Prostate gland (tissue), 2 donors: ENCODE measurements at regions of chr15 and their contacts with region 1.

Region 1: DNA sequence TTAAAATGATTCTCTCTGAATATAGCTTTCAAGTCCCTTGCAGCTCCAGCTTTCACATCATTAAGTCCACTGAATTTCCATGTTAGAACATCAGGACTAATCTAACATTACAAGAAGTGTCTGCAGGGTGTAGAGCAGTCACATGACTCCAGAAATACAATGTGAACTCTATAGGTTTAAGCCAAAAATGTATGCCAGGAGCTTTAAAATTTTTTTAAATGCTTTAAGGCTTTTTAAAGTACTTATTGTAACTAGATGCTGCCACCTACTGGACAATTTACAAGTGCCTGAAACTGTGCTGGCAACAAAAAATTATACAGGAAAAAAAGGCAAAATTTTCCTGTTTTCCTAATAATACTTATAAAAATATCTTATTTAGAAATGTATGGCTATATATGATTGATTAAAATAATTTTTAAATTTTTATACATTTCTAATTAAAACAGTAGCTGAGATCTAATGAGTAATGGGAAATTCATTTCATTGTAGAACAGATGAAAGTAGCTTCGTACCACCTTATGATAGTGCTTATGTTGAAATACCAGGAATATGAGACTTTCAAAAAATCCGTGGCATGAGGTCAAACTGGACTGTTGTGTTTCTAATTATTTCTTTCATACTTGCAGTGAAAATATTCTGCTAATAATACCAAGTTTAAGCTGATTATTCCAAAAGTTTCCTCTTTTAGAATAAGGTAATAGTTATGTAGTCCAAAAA is 25.7 kb downstream of the FSIP1 start:
- DNase-seq: peak; percentile 31
- H3K4me3 ChIP-seq: no peak overlapping the region
- H3K27ac ChIP-seq: no peak overlapping the region
- H3K4me1 ChIP-seq: no peaks in the 10 kb centered on the region
- H3K27me3 ChIP-seq: no peaks in the 10 kb centered on the region
- CTCF ChIP-seq: peak; percentile 68 to 84 (median 76)
- POLR2A ChIP-seq: no peak

Region 2: DNA sequence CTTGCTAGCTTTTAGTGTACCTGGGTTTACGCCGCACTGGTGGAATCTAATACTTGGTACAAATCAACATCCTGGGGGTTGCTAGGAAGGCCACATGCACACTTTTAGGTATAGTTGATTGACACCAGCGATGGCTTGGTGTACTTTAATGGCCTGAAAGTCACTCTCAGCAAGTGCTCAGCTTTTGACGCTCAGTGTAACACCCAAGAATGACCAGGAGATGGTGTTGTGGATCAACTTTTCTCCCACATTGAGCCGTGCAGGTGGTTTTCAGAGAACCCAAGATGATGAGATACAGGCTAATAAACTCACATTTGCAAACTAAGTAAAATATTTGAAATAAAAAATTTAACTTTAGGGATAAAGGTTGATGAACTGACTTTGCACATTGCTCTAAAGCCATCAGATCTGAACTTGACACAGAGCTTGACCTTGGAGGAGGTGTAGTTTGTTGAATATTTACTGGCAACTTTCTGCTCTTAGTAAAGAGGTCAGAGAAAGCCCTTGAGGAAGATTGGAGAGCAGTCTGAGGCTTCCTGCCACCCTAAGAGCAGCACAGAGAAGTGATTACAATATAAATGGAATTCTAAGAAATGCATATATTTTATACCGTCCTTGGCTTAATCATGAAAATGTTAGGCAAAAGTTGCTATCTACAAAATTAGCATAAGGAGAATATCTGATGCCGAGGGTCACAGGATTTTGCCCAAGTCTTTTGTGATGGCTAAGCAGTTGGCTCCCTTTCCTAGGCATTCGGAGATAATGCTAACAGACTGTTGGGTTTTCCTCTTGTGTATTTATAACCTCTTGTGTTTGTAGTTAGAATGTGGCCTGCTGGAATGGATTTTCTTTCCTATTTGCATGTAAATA is 1048.9 kb before region 1 on chr15:
- intact Hi-C with region 1: loop called (anchors 2 kb)
- DNase-seq: peak; percentile 36
- H3K4me3 ChIP-seq: no peak overlapping the region
- H3K27ac ChIP-seq: no peak overlapping the region
- H3K4me1 ChIP-seq: no peaks in the 10 kb centered on the region
- H3K27me3 ChIP-seq: no peaks in the 10 kb centered on the region
- CTCF ChIP-seq: peak in 3 of 4 experiments; percentile 54 to 82 (median 75)
- POLR2A ChIP-seq: no peak

Region 3: GRCh38 chr15:38817427-38818156 is 939.4 kb before region 1 on chr15:
- intact Hi-C with region 1: loop called (anchors 5 kb)
- DNase-seq: peak; percentile 88
- H3K4me3 ChIP-seq: no peak overlapping the region
- H3K27ac ChIP-seq: no peak overlapping the region
- H3K4me1 ChIP-seq: no peaks in the 10 kb centered on the region
- H3K27me3 ChIP-seq: no peaks in the 10 kb centered on the region
- CTCF ChIP-seq: peak; percentile 97 to 99 (median 98)
- POLR2A ChIP-seq: no peak

Region 4: DNA sequence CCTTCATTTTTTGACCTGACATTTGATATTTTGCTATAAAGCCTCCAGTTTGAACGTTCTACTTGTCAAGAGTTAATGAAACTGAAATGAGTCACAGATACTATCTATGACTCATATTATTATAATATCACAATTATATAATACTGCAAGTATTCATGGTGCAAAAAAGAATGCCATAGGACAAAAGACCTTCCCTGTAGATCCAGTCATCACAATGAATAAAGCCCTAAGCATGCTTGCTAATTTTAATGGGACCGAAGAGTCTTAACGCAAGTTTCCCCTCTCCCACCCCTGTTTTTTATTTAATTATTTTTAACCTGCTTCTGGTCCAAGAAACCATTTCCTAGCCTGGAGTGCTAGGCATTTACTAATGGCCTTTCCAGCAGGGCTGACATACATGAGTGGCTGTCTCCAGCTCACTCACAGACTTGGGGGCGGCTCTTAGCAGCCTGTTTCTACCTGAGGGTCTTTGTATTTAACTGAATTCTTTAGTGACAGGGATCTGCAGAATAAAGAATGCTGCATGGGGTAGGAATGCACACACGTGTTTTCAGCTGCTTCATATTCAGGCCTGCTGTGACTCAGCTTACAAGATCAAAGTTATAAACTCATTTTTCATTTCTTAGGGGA is 114.8 kb before region 1 on chr15:
- intact Hi-C with region 1: no loop called
- DNase-seq: no peak
- H3K4me3 ChIP-seq: no peak overlapping the region
- H3K27ac ChIP-seq: no peak overlapping the region
- H3K4me1 ChIP-seq: no peaks in the 10 kb centered on the region
- H3K27me3 ChIP-seq: no peaks in the 10 kb centered on the region
- CTCF ChIP-seq: no peak
- POLR2A ChIP-seq: no peak

Region 5: DNA sequence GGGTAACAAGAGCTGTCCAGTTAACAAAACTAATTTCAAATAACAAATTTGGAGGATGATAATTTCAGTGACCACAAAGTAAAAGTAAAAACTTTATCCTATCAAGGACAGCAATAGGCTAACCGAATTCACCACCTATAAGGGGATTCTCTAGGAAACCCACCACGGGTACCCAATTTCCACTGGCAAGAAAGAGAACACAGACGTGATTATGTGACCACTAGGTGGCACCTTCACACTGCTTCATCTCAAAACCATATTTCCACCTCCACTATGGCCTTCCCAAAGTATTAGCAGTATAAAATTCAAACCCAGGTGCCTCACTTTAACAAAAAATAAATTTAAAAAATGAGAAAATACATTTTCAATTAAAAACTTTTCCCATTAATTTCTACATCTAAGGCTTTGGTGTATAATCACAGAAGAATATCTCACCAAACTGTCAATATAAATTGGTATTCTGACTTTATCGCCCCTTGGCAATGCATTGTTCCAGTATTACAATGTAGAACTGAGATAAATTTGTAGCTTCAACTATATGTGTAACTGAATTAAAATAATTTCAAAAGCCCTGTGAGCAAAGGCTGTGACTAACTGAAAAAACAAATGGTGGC is 70.9 kb before region 1 on chr15:
- intact Hi-C with region 1: loop called (anchors 2 kb)
- DNase-seq: peak; percentile 28
- H3K4me3 ChIP-seq: no peak overlapping the region
- H3K27ac ChIP-seq: no peak overlapping the region
- H3K4me1 ChIP-seq: no peaks in the 10 kb centered on the region
- H3K27me3 ChIP-seq: no peaks in the 10 kb centered on the region
- CTCF ChIP-seq: peak; percentile 43 to 80 (median 77)
- POLR2A ChIP-seq: no peak

Region 6: DNA sequence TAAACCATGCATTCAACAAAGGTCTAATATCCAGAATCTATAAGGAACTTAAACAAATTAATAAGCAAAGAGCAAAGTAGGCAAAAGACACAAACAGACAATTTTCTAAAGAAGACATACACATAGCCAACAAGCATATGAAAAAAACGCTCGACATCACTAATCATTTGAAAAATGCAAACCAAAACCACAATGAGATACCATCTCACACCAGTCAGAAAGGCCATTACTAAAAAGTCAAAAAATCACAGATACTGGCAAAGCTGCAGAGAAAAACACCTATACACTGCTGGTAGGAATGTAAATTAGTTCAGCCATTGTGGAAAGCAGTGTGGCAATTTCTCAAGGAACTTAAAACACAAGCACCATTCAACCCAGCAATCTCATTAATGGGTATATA is 28.1 kb before region 1 on chr15:
- intact Hi-C with region 1: no loop called
- DNase-seq: no peak
- H3K4me3 ChIP-seq: no peak overlapping the region
- H3K27ac ChIP-seq: no peak overlapping the region
- H3K4me1 ChIP-seq: no peaks in the 10 kb centered on the region
- H3K27me3 ChIP-seq: no peaks in the 10 kb centered on the region
- CTCF ChIP-seq: no peak
- POLR2A ChIP-seq: no peak

Region 7: DNA sequence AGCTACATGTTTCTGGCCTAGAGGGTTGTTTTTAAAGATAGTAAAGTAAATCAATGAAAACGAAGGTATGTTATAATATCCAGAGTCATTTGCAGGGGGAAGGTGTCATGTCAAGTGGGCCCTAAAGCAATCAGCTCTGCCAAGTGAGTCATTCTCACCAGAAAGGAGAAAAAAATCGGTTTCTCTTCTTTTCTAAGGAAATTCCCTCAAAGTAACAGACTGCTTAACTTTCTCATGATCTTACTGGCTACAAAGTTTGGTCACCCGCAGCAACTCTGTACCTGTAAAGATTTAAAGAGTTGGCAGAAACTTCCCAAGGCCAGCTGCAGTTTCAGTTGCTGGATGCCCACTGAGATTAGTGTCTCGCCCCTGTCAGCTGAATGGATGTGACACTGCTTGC is 31.1 kb after region 1 on chr15:
- intact Hi-C with region 1: no loop called
- DNase-seq: no peak
- H3K4me3 ChIP-seq: no peak overlapping the region
- H3K27ac ChIP-seq: no peak overlapping the region
- H3K4me1 ChIP-seq: peaks cover 15% of the 10 kb centered on the region
- H3K27me3 ChIP-seq: no peaks in the 10 kb centered on the region
- CTCF ChIP-seq: no peak
- POLR2A ChIP-seq: no peak

Region 8: GRCh38 chr15:40787344-40787841 is 1030.4 kb after region 1 on chr15:
- intact Hi-C with region 1: no loop called
- DNase-seq: peak; percentile 86
- H3K4me3 ChIP-seq: no peak overlapping the region
- H3K27ac ChIP-seq: peak overlapping the region; percentile 80 to 81
- H3K4me1 ChIP-seq: peaks cover 22% of the 10 kb centered on the region
- H3K27me3 ChIP-seq: no peaks in the 10 kb centered on the region
- CTCF ChIP-seq: no peak
- POLR2A ChIP-seq: peak; percentile 17